ENCODE measurements at regions of chr4 and their contacts with region 1.

Region 1: DNA sequence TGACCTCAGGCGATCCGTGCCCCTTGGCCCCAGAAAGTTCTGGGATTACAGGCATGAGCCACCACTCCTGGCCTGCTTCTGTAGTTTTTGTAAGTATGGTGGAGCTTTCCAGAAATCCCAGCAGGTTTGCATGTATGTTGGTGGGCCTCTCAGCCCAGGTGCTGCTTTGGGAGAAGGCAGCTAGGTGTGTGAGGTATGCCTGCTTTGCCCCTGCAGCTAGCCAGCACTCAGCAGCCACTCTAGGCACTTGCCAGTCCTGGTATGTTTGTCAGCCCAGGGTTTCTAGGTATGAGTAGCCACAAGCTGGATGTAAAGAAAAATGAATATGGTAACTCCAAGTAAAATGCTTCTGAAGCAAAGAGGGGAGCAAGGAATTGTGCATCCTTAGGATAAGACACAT is 8.9 kb downstream of the SNX25 start:
- DNase-seq: no peak

Region 2: GRCh38 chr4:185259719-185260118 is 41.4 kb after region 1 on chr4:
- intact Hi-C with region 1: loop called in 1 of 2 experiments (anchors 1 kb)
- DNase-seq: no peak

Measured in posterior vena cava (tissue), 2 donors.